ENCODE measurements at regions of chr1 and their contacts with region 1.

Region 1: DNA sequence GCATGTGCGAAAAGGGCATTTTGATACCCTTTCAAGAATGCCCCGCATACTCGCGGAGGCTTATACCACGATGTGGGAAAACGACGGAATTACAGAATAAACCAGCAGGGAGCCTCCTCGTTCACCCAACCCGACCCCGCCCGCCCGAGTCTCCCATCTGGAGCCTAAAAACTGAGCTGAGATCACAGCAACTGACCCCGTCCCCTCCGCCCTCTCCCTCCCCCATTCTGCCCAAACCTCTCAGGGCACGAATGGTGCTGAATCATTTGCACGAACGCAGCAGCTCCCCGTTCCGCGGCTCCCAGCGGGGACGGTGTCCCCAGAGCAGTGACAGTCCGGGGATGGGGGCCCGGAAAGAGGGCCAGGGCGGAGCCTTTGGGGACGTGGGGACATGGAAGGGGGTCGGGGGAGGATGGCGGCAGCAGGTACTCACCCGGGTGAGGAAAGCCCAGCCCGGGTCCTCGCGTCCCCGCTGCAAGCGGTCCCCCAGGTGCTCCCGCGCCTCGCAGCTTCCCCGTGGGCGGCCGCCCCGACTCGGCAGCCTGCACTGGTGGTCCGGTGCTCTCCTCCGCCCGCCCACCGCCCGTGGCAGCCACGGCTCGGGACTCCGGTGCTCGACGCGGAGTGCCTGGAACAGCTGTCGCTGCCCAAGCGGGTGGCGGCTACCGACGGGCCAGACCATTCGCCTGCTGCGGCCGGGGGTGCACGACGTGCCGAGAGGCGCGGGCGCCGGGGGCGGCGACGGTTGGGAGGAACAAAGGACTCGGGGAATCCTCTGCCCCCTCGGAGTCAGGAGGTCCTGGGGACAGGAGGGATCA is at the start of gene TTLL7:
- DNase-seq: peak; percentile 72
- H3K4me3 ChIP-seq: peak within 1 kb of the TSS; percentile 72 to 83
- H3K27ac ChIP-seq: peak within 1 kb of the TSS; percentile 76 to 78
- H3K4me1 ChIP-seq: no peaks in the 10 kb centered on the region
- H3K27me3 ChIP-seq: no peaks in the 10 kb centered on the region
- CTCF ChIP-seq: peak in 1 of 4 experiments; percentile 17
- POLR2A ChIP-seq: peak; percentile 48
- total RNA-seq, gene TTLL7: 24.7 to 26.6 TPM

Region 2: DNA sequence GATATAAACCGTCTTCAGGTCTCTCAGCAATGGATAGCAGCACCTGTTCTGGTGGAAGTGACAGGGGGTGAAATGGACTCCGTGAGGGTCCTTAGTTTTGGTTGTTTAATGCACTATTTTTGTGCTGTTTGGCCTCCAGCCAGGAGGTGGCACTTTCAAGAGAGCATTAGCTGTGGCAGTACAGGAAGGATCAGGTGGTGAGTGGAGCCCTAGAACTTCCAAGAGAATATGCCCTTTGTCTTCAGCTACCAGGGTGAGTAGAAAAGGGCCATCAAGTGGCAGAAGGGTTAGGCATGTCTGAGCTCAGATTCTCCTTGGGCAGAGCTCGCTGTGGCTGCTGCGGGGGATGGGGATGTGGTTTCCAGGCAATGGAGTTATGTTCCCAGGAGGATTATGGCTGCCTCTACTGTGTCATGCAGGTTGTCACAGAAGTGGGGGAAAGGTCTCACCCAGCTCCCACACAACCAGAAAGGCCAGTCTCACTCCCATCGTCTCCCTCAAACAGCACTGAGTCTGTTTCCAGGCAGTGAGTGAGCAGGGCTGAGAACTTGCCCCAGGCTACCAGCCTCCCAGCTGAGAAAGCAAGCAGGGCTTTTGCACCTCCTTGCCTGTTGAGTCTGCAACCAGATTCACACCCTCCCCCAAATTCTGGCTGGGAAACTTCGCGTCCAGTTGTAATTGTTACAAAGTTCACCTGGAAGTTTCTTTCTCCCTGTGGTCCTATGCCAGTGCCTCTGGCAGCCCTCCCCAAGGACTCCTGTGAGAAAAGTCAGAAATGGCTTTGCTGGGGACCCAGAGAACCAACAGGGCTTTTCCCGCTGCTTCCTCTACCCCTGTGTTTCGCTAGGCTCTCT is 39.3 kb after region 1 on chr1:
- intact Hi-C with region 1: no loop called
- DNase-seq: no peak
- H3K4me3 ChIP-seq: no peak overlapping the region
- H3K27ac ChIP-seq: no peak overlapping the region
- H3K4me1 ChIP-seq: no peaks in the 10 kb centered on the region
- H3K27me3 ChIP-seq: no peaks in the 10 kb centered on the region
- CTCF ChIP-seq: no peak
- POLR2A ChIP-seq: no peak

Region 3: GRCh38 chr1:84077476-84078107 is 78.9 kb after region 1 on chr1:
- intact Hi-C with region 1: loop called (anchors 10 kb)
- DNase-seq: peak; percentile 70
- H3K4me3 ChIP-seq: peak overlapping the region; percentile 75 to 86
- H3K27ac ChIP-seq: peak overlapping the region; percentile 91 to 96
- H3K4me1 ChIP-seq: no peaks in the 10 kb centered on the region
- H3K27me3 ChIP-seq: no peaks in the 10 kb centered on the region
- CTCF ChIP-seq: peak in 1 of 4 experiments; percentile 16
- POLR2A ChIP-seq: no peak

Region 4: GRCh38 chr1:84122780-84123382 is 124.2 kb after region 1 on chr1:
- intact Hi-C with region 1: loop called (anchors 5 kb)
- DNase-seq: peak; percentile 48
- H3K4me3 ChIP-seq: no peak overlapping the region
- H3K27ac ChIP-seq: no peak overlapping the region
- H3K4me1 ChIP-seq: no peaks in the 10 kb centered on the region
- H3K27me3 ChIP-seq: no peaks in the 10 kb centered on the region
- CTCF ChIP-seq: peak; percentile 29 to 72 (median 58)
- POLR2A ChIP-seq: no peak

Region 5: DNA sequence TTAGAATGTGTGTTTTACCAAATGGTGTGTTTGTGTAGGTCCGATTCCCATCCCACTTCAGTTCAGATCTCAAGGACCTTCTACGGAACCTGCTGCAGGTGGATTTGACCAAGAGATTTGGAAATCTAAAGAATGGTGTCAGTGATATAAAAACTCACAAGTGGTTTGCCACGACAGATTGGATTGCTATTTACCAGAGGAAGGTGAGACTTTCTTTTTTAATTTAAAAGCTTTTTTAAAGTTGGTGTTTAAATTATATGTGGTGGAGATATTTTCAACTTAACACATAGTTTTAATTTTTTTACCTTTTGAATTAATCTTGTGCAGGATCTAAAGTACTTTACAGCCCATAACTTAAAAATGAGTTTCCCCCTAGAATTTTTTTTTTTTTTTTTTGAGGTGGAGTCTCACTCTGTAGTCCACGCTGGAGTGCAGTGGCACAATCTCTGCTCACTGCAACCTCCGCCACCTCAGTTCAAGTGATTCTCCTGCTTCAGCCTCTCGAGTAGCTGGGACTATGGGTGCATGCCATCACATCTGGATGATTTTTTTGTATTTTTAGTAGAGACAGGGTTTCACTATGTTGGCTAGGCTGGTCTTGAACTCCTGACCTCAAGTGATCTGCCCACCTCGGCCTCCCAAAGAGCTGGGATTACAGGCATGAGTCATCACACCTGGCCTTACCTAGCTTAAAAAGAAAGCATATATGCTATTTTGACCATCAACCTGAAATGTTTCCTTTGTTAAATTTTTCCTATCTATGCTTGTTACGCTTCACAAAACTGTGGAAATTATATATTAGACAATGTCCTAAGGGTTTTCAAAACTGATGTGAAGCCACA is 215.6 kb after region 1 on chr1:
- intact Hi-C with region 1: no loop called
- DNase-seq: no peak
- H3K4me3 ChIP-seq: no peak overlapping the region
- H3K27ac ChIP-seq: no peak overlapping the region
- H3K4me1 ChIP-seq: no peaks in the 10 kb centered on the region
- H3K27me3 ChIP-seq: no peaks in the 10 kb centered on the region
- CTCF ChIP-seq: no peak
- POLR2A ChIP-seq: no peak

Region 6: DNA sequence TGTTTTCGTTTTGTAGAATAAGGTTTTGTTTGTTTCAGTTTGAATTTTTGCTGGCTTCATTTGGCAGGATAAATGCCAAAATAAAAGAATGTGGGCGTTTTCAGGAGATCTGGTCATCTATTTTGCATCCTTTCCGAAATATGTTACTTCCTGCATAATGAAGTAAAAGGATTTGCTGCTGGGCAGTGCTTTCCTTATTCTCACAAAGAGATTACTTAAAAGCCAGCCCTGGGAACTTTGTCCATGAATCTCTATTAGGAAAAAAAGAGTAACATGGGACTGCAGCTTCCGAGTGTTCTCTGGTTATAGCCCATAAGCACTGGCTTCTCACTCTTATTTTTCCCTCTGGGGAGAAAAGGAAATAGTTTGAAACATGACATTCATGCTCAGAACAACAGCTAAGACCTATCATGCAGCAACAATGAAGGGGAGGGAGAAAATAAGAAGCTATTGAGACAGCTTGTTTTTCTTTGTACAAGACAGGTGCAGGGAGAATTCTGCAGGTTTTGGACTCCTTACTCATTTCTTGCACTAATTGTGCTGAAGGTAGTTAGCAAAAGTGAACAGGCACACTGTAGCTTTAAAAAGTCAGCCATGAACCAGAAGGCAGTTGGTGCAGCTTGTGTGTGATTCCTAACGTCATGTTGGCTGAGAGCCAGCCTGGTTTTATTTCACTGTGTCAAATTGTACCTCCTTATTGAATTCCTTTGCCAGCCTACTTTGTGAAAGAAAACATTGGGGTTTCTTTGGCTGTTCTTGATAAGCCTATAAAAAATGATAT is 302.5 kb after region 1 on chr1 and contains the start of gene SAMD13:
- intact Hi-C with region 1: no loop called
- DNase-seq: peak; percentile 78
- H3K4me3 ChIP-seq: peak within 1 kb of the TSS; percentile 17 to 25
- H3K27ac ChIP-seq: peak within 1 kb of the TSS; percentile 28 to 60
- H3K4me1 ChIP-seq: peaks cover 14% of the 10 kb centered on the region
- H3K27me3 ChIP-seq: no peaks in the 10 kb centered on the region
- CTCF ChIP-seq: no peak
- POLR2A ChIP-seq: no peak
- total RNA-seq, gene SAMD13: 3.1 to 3.4 TPM